ENCODE measurements at regions of chr2 and their contacts with region 1.

Region 1: DNA sequence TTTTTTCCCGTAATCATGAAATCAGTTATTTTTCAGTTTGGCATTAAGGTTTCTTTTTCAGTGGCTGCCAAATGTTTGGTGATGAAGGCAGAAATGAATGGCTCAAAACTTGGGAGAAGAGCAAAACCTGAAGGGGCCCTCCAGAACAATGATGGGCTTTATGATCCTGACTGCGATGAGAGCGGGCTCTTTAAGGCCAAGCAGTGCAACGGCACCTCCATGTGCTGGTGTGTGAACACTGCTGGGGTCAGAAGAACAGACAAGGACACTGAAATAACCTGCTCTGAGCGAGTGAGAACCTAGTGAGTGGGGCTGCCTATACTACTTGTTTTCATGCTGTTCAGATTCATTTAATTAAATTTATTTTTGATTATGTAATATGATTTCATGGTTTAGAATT is 29.2 kb upstream of the MSH2 start:
- DNase-seq: no peak
- H3K4me3 ChIP-seq: no peak overlapping the region
- H3K27ac ChIP-seq: no peak overlapping the region
- H3K4me1 ChIP-seq: peaks cover 3% of the 10 kb centered on the region
- H3K27me3 ChIP-seq: no peaks in the 10 kb centered on the region
- CTCF ChIP-seq: no peak

Region 2: GRCh38 chr2:47046271-47046670 is 327.5 kb before region 1 on chr2:
- CTCF ChIA-PET with region 1: no interaction called
- POLR2A ChIA-PET with region 1: no interaction called
- intact Hi-C with region 1: no loop called
- DNase-seq: no peak
- H3K4me3 ChIP-seq: no peak overlapping the region
- H3K27ac ChIP-seq: no peak overlapping the region
- H3K4me1 ChIP-seq: peaks cover 10% of the 10 kb centered on the region
- H3K27me3 ChIP-seq: no peaks in the 10 kb centered on the region
- CTCF ChIP-seq: no peak

Region 3: DNA sequence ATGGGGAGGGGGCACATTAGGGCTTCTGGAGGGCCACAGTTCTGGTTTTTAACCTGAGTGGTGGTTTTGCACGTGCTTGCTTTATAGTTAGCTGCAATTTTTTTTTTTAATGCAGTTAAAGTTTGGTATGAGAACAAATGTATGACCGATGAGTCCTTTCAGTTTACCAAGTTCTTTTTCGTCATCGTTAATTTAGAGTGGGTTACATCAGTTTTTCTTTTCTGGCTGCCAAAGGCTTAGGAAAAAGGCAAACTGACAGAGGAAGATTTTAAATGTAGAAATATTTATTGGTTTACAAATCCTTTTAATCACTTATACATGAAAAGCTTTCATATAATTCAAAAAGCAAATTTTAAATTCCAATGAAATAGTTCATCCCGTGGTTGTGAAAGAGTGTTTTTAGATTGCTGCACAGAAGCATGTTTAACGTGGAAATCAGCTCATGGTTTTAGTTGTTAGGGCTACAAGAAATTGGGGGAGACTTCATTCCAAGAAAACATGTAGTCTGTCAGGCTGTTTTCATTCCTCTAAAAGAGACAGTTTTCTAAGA is 112.1 kb after region 1 on chr2:
- CTCF ChIA-PET with region 1: no interaction called
- POLR2A ChIA-PET with region 1: interaction called, 22 read pairs
- intact Hi-C with region 1: no loop called
- DNase-seq: no peak
- H3K4me3 ChIP-seq: no peak overlapping the region
- H3K27ac ChIP-seq: no peak overlapping the region
- H3K4me1 ChIP-seq: peaks cover 5% of the 10 kb centered on the region
- H3K27me3 ChIP-seq: no peaks in the 10 kb centered on the region
- CTCF ChIP-seq: no peak

Region 4: DNA sequence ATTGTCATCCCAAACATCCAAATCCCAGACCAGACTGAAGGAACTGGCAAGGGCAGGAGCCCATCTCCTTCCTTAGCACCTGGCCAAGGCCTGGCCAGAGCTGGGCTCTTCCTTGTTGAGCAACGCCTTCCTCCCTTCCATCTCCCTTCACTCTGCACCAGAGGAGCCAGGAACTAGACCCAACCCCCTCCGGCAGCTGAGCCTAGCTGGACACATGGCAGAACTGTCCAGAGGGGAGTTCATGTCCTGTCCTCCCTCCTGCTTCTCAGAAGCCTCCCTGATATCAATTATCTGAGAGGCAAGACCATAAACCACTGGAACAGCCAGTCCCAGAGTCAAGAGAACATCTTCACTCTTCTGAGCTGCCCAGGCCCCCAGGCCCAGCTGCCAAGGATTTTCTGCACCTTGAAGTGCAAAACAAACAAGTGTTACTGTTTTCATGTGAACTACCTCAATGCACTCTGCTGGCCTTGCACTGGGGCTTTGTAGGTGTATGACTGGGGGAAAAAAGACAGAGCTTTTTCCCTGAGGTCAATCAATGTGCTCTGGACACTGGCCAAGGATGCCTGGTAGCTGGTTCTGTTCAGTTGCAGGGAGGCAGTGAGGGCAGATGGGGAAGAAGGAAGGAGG is 301.6 kb after region 1 on chr2:
- CTCF ChIA-PET with region 1: no interaction called
- POLR2A ChIA-PET with region 1: interaction called, 28 read pairs
- intact Hi-C with region 1: no loop called
- DNase-seq: no peak
- H3K4me3 ChIP-seq: no peak overlapping the region
- H3K27ac ChIP-seq: no peak overlapping the region
- H3K4me1 ChIP-seq: no peaks in the 10 kb centered on the region
- H3K27me3 ChIP-seq: no peaks in the 10 kb centered on the region
- CTCF ChIP-seq: no peak